Activated naive CD4-positive, alpha-beta T cell treated with anti-CD3 and anti-CD28 coated beads, Interleukin-2, amount 10 ng/mL, durations not matched to agents 7 days and 5 days (primary cell): ENCODE measurements at regions of chr13 and their contacts with region 1.

Region 1: GRCh38 chr13:39144941-39145533 is 106.8 kb downstream of the NHLRC3 start:
- DNase-seq: peak; percentile 34
- H3K4me3 Mint-ChIP-seq: no peak overlapping the region
- H3K27ac Mint-ChIP-seq: no peak overlapping the region
- H3K4me1 Mint-ChIP-seq: no peaks in the 10 kb centered on the region
- H3K27me3 Mint-ChIP-seq: peaks cover 5% of the 10 kb centered on the region

Region 2: GRCh38 chr13:39185326-39185725 is 40.3 kb after region 1 on chr13:
- CTCF ChIA-PET with region 1: no interaction called
- DNase-seq: no peak
- H3K4me3 Mint-ChIP-seq: no peak overlapping the region
- H3K27ac Mint-ChIP-seq: no peak overlapping the region
- H3K4me1 Mint-ChIP-seq: no peaks in the 10 kb centered on the region
- H3K27me3 Mint-ChIP-seq: no peaks in the 10 kb centered on the region

Region 3: DNA sequence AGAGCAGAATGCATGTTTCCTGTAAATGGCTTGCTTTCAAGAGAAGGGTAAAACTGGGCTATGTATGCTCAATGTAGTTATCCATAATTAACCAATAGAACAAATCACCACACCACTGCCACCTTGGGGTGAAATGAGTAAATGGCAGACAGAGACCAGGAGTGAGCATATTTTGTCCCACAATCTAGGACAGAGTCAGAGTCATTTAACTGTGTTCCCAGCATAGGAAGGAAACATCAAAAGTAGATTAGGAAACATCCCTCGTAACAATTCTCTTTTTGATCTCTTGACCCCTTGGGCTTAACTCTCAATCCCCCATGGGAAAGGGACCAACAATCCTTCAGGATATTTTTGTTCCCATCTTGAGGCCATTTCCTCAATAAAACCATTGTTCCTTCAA is 118.0 kb after region 1 on chr13:
- CTCF ChIA-PET with region 1: interaction called, 30 read pairs
- DNase-seq: peak; percentile 49
- H3K4me3 Mint-ChIP-seq: no peak overlapping the region
- H3K27ac Mint-ChIP-seq: no peak overlapping the region
- H3K4me1 Mint-ChIP-seq: peaks cover 2% of the 10 kb centered on the region
- H3K27me3 Mint-ChIP-seq: peaks cover 8% of the 10 kb centered on the region

Region 4: GRCh38 chr13:39406688-39407087 is 261.7 kb after region 1 on chr13:
- CTCF ChIA-PET with region 1: no interaction called
- DNase-seq: no peak
- H3K4me3 Mint-ChIP-seq: no peak overlapping the region
- H3K27ac Mint-ChIP-seq: no peak overlapping the region
- H3K4me1 Mint-ChIP-seq: no peaks in the 10 kb centered on the region
- H3K27me3 Mint-ChIP-seq: peaks cover 3% of the 10 kb centered on the region